AG04449 (cell line): ENCODE measurements at regions of chr17 and their contacts with region 1.

Region 1: GRCh38 chr17:41801374-41802271 is 10.1 kb downstream of the P3H4 start:
- DNase-seq: no peak
- H3K4me3 ChIP-seq: no peak overlapping the region; the same call in 1 of the 2 replicates
- CTCF ChIP-seq: peak; percentile 97

Region 2: DNA sequence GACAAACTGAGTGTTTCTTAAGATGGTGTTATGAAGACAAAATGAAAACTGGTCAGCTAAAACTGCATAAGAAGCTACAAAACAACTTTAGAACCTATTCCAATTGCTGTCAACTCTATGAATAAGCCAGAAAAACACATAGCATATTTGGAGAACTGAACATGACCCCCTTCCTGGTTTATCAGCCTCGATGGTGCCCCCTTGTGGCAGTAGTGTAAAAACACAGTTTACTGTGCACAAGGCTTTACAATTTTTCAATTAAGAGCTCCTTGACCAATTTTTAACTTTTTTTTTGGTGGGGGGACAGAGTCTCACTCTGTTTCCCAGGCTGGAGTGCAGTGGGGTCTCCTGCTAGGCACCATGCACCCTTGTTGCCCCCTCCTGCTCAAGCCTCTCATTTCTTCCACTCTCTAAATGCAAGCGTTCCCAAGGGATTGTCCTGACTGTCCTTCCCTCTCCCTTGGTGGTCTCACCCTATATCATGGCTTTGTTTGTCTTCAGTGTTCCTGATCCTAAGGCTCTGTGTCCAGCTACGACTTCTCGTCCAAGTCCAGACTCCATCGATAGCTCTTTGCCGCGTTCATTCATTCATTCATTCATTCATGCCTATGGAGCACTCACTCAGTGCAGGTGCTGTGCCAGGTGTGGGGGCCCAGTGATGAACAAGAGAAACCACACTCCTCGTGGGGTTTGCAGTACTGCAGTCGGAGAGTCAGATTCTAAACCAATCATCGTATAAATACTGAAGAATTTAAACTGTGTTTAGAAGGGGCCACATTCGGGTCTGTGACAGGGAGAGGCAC is 105.5 kb before region 1 on chr17:
- CTCF ChIA-PET with region 1: interaction called, 10 read pairs
- POLR2A ChIA-PET with region 1: no interaction called
- DNase-seq: no peak
- H3K4me3 ChIP-seq: no peak overlapping the region
- CTCF ChIP-seq: peak; percentile 65

Region 3: DNA sequence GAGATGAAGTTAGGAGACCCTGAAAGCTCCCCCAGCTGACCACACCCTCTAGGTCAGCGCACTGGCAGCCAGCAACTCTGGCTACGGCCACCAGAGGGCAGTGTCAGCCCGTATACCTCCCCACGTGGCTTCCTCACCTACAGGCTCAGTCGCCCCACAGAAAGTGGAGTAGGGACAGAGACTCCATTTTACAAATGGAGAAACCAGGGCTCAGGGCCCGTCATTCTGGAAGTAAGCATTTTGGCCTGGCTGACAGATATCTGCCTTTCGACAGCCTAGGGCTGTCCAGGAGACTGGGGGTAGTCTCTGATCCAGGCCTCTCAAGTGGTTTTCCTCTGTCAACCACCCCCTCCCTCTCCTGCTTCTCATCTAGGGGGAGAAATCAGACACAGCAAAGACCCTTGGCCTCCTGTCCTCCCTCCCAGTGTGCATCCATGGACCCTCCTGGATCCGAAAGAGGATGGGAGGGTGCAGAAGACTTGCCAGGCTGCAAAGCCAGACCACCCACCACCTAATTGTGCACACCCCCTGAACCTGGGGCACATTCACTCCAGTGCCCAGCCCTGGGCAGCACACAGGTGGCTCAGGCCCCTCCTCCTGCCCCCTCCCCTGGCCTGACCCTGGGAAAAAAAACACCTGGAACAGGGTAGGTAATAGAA is 63.4 kb before region 1 on chr17:
- CTCF ChIA-PET with region 1: interaction called, 189 read pairs
- POLR2A ChIA-PET with region 1: interaction called, 5 read pairs
- DNase-seq: no peak
- H3K4me3 ChIP-seq: no peak overlapping the region
- CTCF ChIP-seq: peak; percentile 93

Region 4: GRCh38 chr17:41777574-41778188 is 23.9 kb before region 1 on chr17:
- CTCF ChIA-PET with region 1: interaction called, 34 read pairs
- POLR2A ChIA-PET with region 1: interaction called, 3 read pairs
- DNase-seq: peak; percentile 47
- H3K4me3 ChIP-seq: no peak overlapping the region
- CTCF ChIP-seq: no peak

Region 5: DNA sequence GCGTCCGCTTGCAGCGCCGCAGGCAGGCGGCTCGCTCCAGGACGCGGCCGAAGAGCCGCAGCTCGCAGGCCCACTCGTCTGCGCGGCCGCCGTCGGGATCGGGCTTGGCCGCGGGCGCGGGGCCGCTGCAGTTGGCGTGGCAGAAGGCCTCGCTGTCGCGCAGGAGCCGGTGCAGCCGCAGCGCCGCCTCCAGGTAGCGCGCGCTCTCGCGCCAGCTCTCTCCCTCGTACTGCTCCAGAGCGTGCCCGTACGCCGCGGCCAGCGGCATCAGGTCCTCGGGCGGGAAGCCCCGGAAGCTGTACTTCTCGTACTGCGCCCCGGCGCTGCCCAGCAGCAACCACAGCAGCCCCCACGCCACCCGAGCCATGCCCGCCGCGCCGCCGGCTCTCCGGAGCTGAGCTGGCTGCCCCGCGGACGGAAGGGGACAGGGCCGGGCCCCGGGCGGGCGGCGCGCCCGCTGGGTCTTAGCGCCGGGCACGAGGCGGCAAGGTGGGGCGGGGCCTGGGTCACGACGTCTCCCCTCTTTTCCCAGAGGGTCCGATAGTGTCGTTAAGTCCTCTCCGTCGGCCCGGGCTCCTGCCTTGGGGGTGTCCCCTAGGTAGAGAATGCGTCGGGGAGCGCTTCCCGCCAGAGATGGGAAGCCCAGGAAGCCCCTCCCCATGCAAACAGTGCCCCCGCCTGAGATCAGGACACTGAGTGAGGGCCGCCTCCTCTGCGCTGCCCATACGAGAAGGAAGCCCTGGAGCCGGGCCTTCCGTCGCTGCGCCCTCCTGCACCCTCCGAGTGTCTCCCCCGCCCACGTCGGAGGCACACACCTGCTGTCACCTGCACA is 10.1 kb after region 1 on chr17 and contains the start of gene P3H4:
- CTCF ChIA-PET with region 1: interaction called, 105 read pairs
- POLR2A ChIA-PET with region 1: interaction called, 8 read pairs
- DNase-seq: no peak
- H3K4me3 ChIP-seq: peak within 1 kb of the TSS; percentile 87
- CTCF ChIP-seq: peak; percentile 78